ENCODE measurements at regions of chr2 and their contacts with region 1.

Region 1: GRCh38 chr2:25252281-25253105 is 84.1 kb upstream of the POMC start:
- DNase-seq: peak; percentile 83 to 88
- H3K4me3 ChIP-seq: peak overlapping the region; percentile 83 to 92 (median 86)
- H3K27ac ChIP-seq: peak overlapping the region; percentile 54; the same call in 1 of the 2 replicates
- H3K4me1 ChIP-seq: peaks cover 19 to 37% (median 24%) of the 10 kb centered on the region in 4 experiments
- H3K27me3 ChIP-seq: no peaks in the 10 kb centered on the region
- CTCF ChIP-seq: no peak
- EP300 ChIP-seq: no peak; a peak in 1 of 3 replicates
- POLR2A ChIP-seq: peak in 1 of 2 experiments; percentile 50; a peak in 2 of 3 replicates
- RAD21 ChIP-seq: no peak

Region 2: DNA sequence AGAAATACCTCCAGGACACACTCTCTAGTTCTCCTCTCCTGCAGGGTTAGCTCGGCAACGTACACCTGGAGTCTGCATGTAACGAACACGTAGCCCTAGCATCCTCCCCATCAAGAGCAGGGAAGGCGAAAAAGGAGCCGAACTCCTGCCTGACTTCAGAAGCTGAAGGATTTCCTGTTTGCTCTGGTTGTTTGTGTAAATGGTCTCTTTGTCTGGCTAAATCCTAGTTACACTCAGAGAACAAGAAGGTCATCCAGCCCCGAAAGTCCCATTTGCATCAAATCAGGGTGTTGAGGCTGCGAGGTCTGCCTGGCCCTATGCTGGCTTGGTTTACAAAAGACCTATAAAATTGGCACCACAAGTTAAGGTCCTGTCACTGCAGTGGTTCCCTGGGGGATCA is 17.8 kb before region 1 on chr2:
- CTCF ChIA-PET with region 1: interaction called, 13 read pairs
- POLR2A ChIA-PET with region 1: interaction called, 135 read pairs
- DNase-seq: no peak
- H3K4me3 ChIP-seq: no peak overlapping the region
- H3K27ac ChIP-seq: no peak overlapping the region
- H3K4me1 ChIP-seq: peaks cover 0 to 8% (median 3%) of the 10 kb centered on the region in 4 experiments; a peak in 3 of 7 replicates
- H3K27me3 ChIP-seq: no peaks in the 10 kb centered on the region
- CTCF ChIP-seq: no peak
- EP300 ChIP-seq: no peak
- POLR2A ChIP-seq: no peak
- RAD21 ChIP-seq: no peak

Region 3: GRCh38 chr2:25268139-25268538 is 15.6 kb after region 1 on chr2:
- CTCF ChIA-PET with region 1: interaction called, 6 read pairs
- POLR2A ChIA-PET with region 1: interaction called, 24 read pairs
- DNase-seq: no peak
- H3K4me3 ChIP-seq: no peak overlapping the region
- H3K27ac ChIP-seq: no peak overlapping the region
- H3K4me1 ChIP-seq: peaks cover 6 to 23% (median 13%) of the 10 kb centered on the region in 4 experiments
- H3K27me3 ChIP-seq: no peaks in the 10 kb centered on the region
- CTCF ChIP-seq: no peak
- EP300 ChIP-seq: no peak
- POLR2A ChIP-seq: no peak
- RAD21 ChIP-seq: no peak